ENCODE measurements at regions of chr15 and their contacts with region 1.

Region 1: DNA sequence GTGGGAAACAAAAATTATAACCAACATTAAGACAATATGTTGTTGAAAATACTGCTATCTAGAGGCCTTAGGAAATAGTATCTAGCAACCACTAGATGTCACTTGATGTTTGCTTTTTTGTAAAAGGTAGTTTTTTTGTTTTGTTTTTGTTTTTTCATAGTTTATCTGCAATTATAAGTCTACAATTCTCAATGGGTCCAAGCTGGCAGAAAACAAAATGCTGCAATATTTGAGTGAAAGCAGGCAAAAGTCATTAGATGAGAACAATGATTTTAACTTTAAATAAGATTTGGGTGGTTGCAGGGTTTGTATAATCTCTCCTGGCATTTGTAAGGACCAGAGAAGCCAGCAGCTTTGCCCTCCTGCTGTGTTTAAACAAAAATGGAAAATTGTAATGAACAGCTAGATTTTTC is 27.0 kb downstream of the DUT start:
- DNase-seq: no peak
- ATAC-seq: no peak
- H3K4me3 Mint-ChIP-seq: no peak overlapping the region
- H3K27ac Mint-ChIP-seq: no peak overlapping the region
- H3K4me1 Mint-ChIP-seq: peaks cover 7% of the 10 kb centered on the region
- H3K27me3 Mint-ChIP-seq: no peaks in the 10 kb centered on the region
- CTCF ChIP-seq: no peak

Region 2: GRCh38 chr15:48800811-48801455 is 442.7 kb after region 1 on chr15:
- CTCF ChIA-PET with region 1: interaction called, 11 read pairs
- POLR2A ChIA-PET with region 1: no interaction called
- intact Hi-C with region 1: loop called (anchors 1 kb)
- DNase-seq: no peak
- ATAC-seq: peak; percentile 40
- H3K4me3 Mint-ChIP-seq: no peak overlapping the region
- H3K27ac Mint-ChIP-seq: no peak overlapping the region
- H3K4me1 Mint-ChIP-seq: peaks cover 9% of the 10 kb centered on the region
- H3K27me3 Mint-ChIP-seq: no peaks in the 10 kb centered on the region
- CTCF ChIP-seq: no peak

Region 3: GRCh38 chr15:48855501-48856440 is 497.5 kb after region 1 on chr15:
- CTCF ChIA-PET with region 1: no interaction called
- POLR2A ChIA-PET with region 1: no interaction called
- intact Hi-C with region 1: loop called (anchors 2 kb)
- DNase-seq: no peak
- ATAC-seq: no peak
- H3K4me3 Mint-ChIP-seq: no peak overlapping the region
- H3K27ac Mint-ChIP-seq: no peak overlapping the region
- H3K4me1 Mint-ChIP-seq: no peaks in the 10 kb centered on the region
- H3K27me3 Mint-ChIP-seq: peaks cover 20% of the 10 kb centered on the region
- CTCF ChIP-seq: no peak

Region 4: GRCh38 chr15:49421991-49422390 is 1063.8 kb after region 1 on chr15:
- CTCF ChIA-PET with region 1: no interaction called
- POLR2A ChIA-PET with region 1: no interaction called
- intact Hi-C with region 1: loop called (anchors 2 kb)
- DNase-seq: peak; percentile 18
- ATAC-seq: peak; percentile 42
- H3K4me3 Mint-ChIP-seq: no peak overlapping the region
- H3K27ac Mint-ChIP-seq: no peak overlapping the region
- H3K4me1 Mint-ChIP-seq: peaks cover 3% of the 10 kb centered on the region
- H3K27me3 Mint-ChIP-seq: peaks cover 3% of the 10 kb centered on the region
- CTCF ChIP-seq: no peak

Measured in activated B cell treated with CpG ODN at 0.5 μM for 24 hours (primary cell).